MCF 10A (cell line): ENCODE measurements at regions of chr5 and their contacts with region 1.

Region 1: GRCh38 chr5:68215208-68215897 is at the start of gene PIK3R1:
- DNase-seq: peak; percentile 94
- H3K4me3 Mint-ChIP-seq: peak within 1 kb of the TSS; percentile 92
- H3K27ac Mint-ChIP-seq: peak within 1 kb of the TSS; percentile 87
- H3K4me1 Mint-ChIP-seq: peaks cover 17% of the 10 kb centered on the region
- H3K27me3 Mint-ChIP-seq: no peaks in the 10 kb centered on the region
- CTCF ChIP-seq: no peak
- total RNA-seq, gene PIK3R1: 124 and 151 TPM in 2 replicates

Region 2: GRCh38 chr5:67268231-67269021 is 946.9 kb before region 1 on chr5:
- CTCF ChIA-PET with region 1: no interaction called
- POLR2A ChIA-PET with region 1: interaction called, 27 read pairs
- intact Hi-C with region 1: no loop called
- DNase-seq: peak; percentile 97
- H3K4me3 Mint-ChIP-seq: no peak overlapping the region
- H3K27ac Mint-ChIP-seq: no peak overlapping the region
- H3K4me1 Mint-ChIP-seq: peaks cover 18% of the 10 kb centered on the region
- H3K27me3 Mint-ChIP-seq: no peaks in the 10 kb centered on the region
- CTCF ChIP-seq: no peak

Region 3: GRCh38 chr5:67815455-67816391 is 399.6 kb before region 1 on chr5:
- CTCF ChIA-PET with region 1: no interaction called
- POLR2A ChIA-PET with region 1: interaction called, 15 read pairs
- intact Hi-C with region 1: loop called (anchors 10 kb)
- DNase-seq: peak; percentile 58
- H3K4me3 Mint-ChIP-seq: peak overlapping the region; percentile 26
- H3K27ac Mint-ChIP-seq: peak overlapping the region; percentile 82
- H3K4me1 Mint-ChIP-seq: peaks cover 26% of the 10 kb centered on the region
- H3K27me3 Mint-ChIP-seq: no peaks in the 10 kb centered on the region
- CTCF ChIP-seq: no peak

Region 4: DNA sequence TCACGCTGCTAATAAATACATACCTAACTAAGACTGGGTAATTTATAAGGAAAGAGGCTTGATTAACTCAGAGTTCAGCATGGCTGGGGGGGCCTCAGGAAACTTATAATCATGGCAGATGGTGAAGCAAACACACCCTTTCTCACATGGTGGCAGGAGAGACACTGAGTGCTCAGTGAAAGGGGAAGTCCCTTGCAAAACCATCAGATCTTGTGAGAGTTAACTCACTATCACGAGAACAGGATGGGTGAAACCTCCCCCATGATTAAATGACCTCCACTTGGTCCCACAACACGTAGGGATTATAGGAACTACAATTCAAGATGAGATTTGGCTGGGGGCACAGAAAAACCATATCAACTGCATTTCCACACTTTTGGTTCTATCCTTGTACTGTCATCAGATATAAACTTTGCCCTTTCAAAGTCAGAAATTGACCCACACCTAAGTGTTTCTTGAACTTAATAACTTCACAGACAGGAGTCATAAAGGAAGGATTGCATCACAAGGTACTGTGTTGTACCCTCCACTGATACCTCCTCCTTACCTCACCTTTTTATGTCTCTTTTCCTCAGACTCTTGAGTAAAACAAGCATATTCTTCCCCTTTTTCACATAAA is 318.9 kb before region 1 on chr5:
- CTCF ChIA-PET with region 1: interaction called, 4 read pairs
- POLR2A ChIA-PET with region 1: interaction called, 106 read pairs
- intact Hi-C with region 1: no loop called
- DNase-seq: peak; percentile 27
- H3K4me3 Mint-ChIP-seq: no peak overlapping the region
- H3K27ac Mint-ChIP-seq: peak overlapping the region; percentile 82
- H3K4me1 Mint-ChIP-seq: peaks cover 39% of the 10 kb centered on the region
- H3K27me3 Mint-ChIP-seq: no peaks in the 10 kb centered on the region
- CTCF ChIP-seq: no peak

Region 5: DNA sequence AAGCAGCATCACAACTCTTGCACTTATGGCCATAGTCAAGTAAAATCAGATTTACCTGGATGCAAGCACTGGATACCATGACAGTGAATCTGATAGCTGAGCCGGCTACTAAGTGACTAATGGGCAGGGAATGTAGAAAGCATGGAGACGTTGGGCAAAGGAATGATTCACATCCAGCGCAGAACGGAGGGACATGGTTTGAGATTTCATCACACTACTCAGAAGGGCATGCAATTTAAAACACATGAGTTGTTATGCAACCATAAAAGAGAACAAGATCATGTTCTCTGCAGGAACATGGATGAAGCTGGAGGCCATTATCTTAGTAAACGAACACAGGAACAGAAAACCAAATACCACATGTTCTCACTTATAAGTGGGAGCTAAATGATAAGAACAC is 168.9 kb before region 1 on chr5:
- CTCF ChIA-PET with region 1: interaction called, 4 read pairs
- POLR2A ChIA-PET with region 1: interaction called, 18 read pairs
- intact Hi-C with region 1: loop called (anchors 2 kb)
- DNase-seq: peak; percentile 98
- H3K4me3 Mint-ChIP-seq: peak overlapping the region; percentile 11
- H3K27ac Mint-ChIP-seq: peak overlapping the region; percentile 92
- H3K4me1 Mint-ChIP-seq: peaks cover 23% of the 10 kb centered on the region
- H3K27me3 Mint-ChIP-seq: no peaks in the 10 kb centered on the region
- CTCF ChIP-seq: no peak

Region 6: GRCh38 chr5:68239487-68239886 is 24.1 kb after region 1 on chr5:
- CTCF ChIA-PET with region 1: interaction called, 3 read pairs
- POLR2A ChIA-PET with region 1: interaction called, 112 read pairs
- intact Hi-C with region 1: loop called (anchors 2 kb)
- DNase-seq: peak; percentile 65
- H3K4me3 Mint-ChIP-seq: peak overlapping the region; percentile 60
- H3K27ac Mint-ChIP-seq: peak overlapping the region; percentile 89
- H3K4me1 Mint-ChIP-seq: peaks cover 53% of the 10 kb centered on the region
- H3K27me3 Mint-ChIP-seq: no peaks in the 10 kb centered on the region
- CTCF ChIP-seq: no peak

Region 7: GRCh38 chr5:68272289-68272688 is 56.9 kb after region 1 on chr5:
- CTCF ChIA-PET with region 1: interaction called, 3 read pairs
- POLR2A ChIA-PET with region 1: interaction called, 61 read pairs
- intact Hi-C with region 1: no loop called
- DNase-seq: no peak
- H3K4me3 Mint-ChIP-seq: no peak overlapping the region
- H3K27ac Mint-ChIP-seq: no peak overlapping the region
- H3K4me1 Mint-ChIP-seq: peaks cover 73% of the 10 kb centered on the region
- H3K27me3 Mint-ChIP-seq: no peaks in the 10 kb centered on the region
- CTCF ChIP-seq: peak; percentile 35